Activated B cell treated with CpG ODN at 0.5 μM for 24 hours (primary cell): ENCODE measurements at regions of chr2 and their contacts with region 1.

Region 1: GRCh38 chr2:43637030-43637803 is at the start of gene PLEKHH2:
- DNase-seq: peak; percentile 73
- ATAC-seq: peak; percentile 100
- H3K4me3 Mint-ChIP-seq: peak within 1 kb of the TSS; percentile 81
- H3K27ac Mint-ChIP-seq: no peak within 1 kb of the TSS
- H3K4me1 Mint-ChIP-seq: peaks cover 13% of the 10 kb centered on the region
- H3K27me3 Mint-ChIP-seq: peaks cover 40% of the 10 kb centered on the region
- CTCF ChIP-seq: no peak
- total RNA-seq, gene PLEKHH2: 0.07 and 0.11 TPM in 2 replicates

Region 2: GRCh38 chr2:43773876-43774613 is 136.8 kb after region 1 on chr2 and contains the start of gene DYNC2LI1:
- CTCF ChIA-PET with region 1: no interaction called
- POLR2A ChIA-PET with region 1: no interaction called
- intact Hi-C with region 1: loop called (anchors 10 kb)
- DNase-seq: peak; percentile 75
- ATAC-seq: peak; percentile 98
- H3K4me3 Mint-ChIP-seq: peak within 1 kb of the TSS; percentile 100
- H3K27ac Mint-ChIP-seq: peak within 1 kb of the TSS; percentile 85
- H3K4me1 Mint-ChIP-seq: peaks cover 12% of the 10 kb centered on the region
- H3K27me3 Mint-ChIP-seq: peaks cover 4% of the 10 kb centered on the region
- CTCF ChIP-seq: no peak
- total RNA-seq, gene DYNC2LI1: 8.9 and 10.4 TPM in 2 replicates